CD8-positive, alpha-beta T cell (primary cell): ENCODE measurements at regions of chr6 and their contacts with region 1.

Region 1: DNA sequence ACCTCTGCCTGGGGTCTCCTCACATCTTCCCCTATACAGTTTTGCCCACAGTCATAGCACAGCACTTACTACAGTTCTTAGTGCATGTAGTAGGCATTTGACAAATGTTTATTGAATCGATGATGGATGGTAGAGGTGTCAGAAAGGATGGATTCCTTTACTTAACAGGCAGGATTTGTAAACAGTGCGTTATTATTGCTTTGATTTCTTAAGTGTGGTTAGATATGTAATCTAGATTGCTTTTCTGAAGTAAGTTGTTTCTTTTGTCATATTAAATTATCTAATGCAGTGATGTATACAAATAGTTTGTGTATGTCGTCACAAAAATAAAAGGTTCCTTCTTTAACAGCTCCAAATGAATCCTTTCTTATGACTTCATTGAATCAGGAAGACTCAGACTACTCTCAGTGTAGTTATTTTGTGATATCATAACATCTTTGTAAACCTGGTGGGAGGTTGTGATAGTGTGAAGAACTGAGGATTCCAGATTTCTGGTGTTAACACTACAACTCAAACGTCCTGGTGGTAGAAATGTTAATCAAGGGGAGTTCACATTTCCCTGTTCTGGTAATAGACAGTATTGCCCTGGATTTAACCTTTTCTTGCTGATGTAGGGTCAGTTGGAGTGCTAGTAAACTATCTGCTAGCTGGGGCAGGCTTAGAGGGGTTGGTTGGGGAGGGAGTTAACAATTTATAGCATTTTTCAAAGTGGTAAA is 87.7 kb downstream of the HIVEP1 start:
- DNase-seq: no peak
- ATAC-seq: no peak
- H3K4me3 ChIP-seq: no peak overlapping the region
- H3K4me3 Mint-ChIP-seq: no peak overlapping the region
- H3K27ac ChIP-seq: no peak overlapping the region
- H3K27ac Mint-ChIP-seq: no peak overlapping the region
- H3K4me1 ChIP-seq: no peaks in the 10 kb centered on the region
- H3K4me1 Mint-ChIP-seq: peaks cover 44% of the 10 kb centered on the region
- H3K27me3 ChIP-seq: no peaks in the 10 kb centered on the region
- H3K27me3 Mint-ChIP-seq: no peaks in the 10 kb centered on the region
- CTCF ChIP-seq: no peak

Region 2: DNA sequence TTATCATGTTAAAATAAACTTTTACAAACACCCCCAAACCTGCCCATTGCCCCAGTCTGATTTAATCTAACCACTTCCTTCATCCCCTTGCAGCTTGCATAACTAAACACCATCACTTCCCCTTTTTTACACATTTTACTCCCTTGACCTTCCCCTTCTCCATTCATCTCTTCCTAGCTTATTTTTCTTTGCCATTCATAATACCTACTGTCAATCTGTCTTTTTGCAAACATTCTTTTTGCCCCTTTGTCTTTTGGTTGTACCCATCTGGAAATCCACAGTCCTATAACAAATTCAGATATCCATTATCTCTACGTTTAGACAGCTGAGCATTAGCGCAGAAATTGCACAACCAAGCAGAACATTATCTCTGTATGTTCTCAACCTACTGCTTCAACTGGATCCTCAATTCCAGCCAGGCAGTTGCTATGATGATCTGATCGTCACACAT is 1456.6 kb before region 1 on chr6:
- CTCF ChIA-PET with region 1: no interaction called
- POLR2A ChIA-PET with region 1: no interaction called
- intact Hi-C with region 1: no loop called
- DNase-seq: peak in 1 of 9 experiments; percentile 6
- ATAC-seq: no peak
- H3K4me3 ChIP-seq: no peak overlapping the region
- H3K4me3 Mint-ChIP-seq: no peak overlapping the region
- H3K27ac ChIP-seq: no peak overlapping the region
- H3K27ac Mint-ChIP-seq: no peak overlapping the region
- H3K4me1 ChIP-seq: no peaks in the 10 kb centered on the region
- H3K4me1 Mint-ChIP-seq: peaks cover 8% of the 10 kb centered on the region
- H3K27me3 ChIP-seq: no peaks in the 10 kb centered on the region
- H3K27me3 Mint-ChIP-seq: peaks cover 14% of the 10 kb centered on the region
- CTCF ChIP-seq: no peak

Region 3: DNA sequence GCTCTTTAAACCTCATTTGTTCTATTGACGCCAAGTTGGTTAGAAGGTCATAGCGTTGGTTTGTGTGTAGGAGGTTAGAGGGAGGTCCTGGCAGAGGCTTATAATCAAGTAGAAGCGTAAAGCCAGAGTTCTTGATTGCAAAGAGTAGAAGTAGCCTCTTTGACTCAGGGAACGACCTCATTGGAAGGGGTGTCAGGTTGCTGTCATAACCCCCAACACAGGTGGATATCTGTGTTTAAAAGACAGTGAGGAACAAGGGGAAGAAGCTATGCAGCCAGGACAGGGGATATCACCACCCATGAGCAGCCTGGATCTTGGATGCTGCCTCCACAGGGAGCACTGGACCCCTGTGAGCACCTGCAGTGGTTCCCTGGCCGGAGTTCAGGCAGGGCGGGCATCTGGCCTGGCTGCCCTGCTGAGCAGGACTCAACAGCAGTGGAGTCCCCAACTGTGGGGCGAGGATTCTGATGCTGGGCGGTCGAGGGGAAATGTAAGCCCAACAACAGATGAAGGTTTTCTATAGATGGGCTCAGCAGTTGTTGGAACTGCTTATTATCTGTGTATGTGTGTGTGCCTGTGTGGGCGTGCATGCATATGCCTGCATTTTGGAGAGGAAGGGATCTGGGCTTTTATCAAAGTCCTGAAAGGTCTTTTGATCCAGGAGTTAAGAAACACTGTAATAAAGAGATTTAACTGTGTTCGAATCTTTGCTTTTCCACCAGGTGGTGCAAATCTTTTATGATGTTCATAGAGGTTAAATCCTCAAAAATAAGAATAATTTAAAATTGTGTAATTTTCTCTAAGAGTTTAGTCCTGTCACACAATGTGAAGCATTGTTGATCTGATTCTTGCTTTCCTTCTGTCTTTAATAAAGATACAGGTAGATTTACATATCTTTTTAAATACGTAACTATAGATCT is 60.0 kb before region 1 on chr6:
- CTCF ChIA-PET with region 1: no interaction called
- POLR2A ChIA-PET with region 1: no interaction called
- intact Hi-C with region 1: no loop called
- DNase-seq: no peak
- ATAC-seq: no peak
- H3K4me3 ChIP-seq: no peak overlapping the region
- H3K4me3 Mint-ChIP-seq: no peak overlapping the region
- H3K27ac ChIP-seq: no peak overlapping the region
- H3K27ac Mint-ChIP-seq: peak overlapping the region; percentile 69
- H3K4me1 ChIP-seq: peaks cover 15% of the 10 kb centered on the region
- H3K4me1 Mint-ChIP-seq: peaks cover 63% of the 10 kb centered on the region
- H3K27me3 ChIP-seq: no peaks in the 10 kb centered on the region
- H3K27me3 Mint-ChIP-seq: no peaks in the 10 kb centered on the region
- CTCF ChIP-seq: no peak

Region 4: DNA sequence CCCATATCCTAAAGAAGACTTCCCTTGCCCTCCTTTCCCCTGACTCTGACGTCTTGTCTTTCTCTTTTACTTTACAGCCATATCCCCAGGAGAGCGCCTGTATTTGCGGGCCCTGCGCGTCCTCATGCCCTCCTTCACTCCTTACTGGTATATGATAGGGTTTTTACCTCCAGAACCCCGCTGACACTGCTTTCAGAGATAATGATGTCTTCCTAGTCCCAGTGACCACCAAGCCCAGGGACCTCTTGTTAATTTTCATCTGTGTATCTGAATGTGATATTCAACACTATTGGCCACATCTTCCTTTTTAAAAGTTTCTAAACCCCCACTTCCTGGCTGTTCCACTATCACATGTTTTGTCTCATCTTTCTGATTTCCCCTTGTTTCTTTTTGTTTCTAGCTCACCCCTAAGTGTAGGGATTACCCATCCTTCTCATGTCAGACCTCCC is 14.3 kb after region 1 on chr6:
- CTCF ChIA-PET with region 1: no interaction called
- POLR2A ChIA-PET with region 1: interaction called, 3 read pairs
- intact Hi-C with region 1: loop called in 1 of 2 experiments (anchors 2 kb)
- DNase-seq: peak in 1 of 9 experiments; percentile 17
- ATAC-seq: no peak
- H3K4me3 ChIP-seq: no peak overlapping the region
- H3K4me3 Mint-ChIP-seq: no peak overlapping the region
- H3K27ac ChIP-seq: no peak overlapping the region
- H3K27ac Mint-ChIP-seq: peak overlapping the region; percentile 7
- H3K4me1 ChIP-seq: peaks cover 60% of the 10 kb centered on the region
- H3K4me1 Mint-ChIP-seq: peaks cover 62% of the 10 kb centered on the region
- H3K27me3 ChIP-seq: no peaks in the 10 kb centered on the region
- H3K27me3 Mint-ChIP-seq: no peaks in the 10 kb centered on the region
- CTCF ChIP-seq: no peak

Region 5: DNA sequence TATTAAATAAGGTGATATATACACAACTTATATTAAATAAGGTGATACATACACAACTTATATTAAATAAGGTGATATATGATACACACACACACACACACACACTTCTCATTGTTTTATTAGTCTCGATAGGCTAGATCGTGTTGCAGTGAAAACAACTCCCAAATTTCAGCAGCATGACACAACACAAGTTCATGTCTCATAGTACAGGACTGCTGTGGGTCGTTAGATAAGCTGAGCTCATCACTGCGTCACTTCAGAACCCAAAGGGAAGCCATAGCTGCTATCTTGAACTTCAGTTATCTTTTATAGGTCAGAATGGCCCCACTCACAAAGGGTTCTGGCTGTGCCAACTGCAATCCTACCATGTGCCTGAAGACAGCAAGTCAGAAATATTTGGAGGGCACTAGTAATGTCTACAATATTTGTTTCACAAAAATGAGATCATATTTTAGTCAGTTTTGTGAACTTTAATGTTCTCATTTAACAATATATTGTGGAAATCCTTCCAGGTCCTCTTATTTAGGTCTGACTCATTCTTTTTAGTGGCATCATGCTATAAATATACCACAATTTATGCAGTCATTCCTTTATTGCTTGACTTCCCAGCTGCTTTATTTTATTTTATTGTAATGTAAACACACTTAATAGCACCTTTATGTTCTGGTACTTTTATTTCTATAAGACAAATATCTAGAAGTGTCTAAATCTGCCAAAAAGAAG is 907.0 kb after region 1 on chr6:
- CTCF ChIA-PET with region 1: no interaction called
- POLR2A ChIA-PET with region 1: no interaction called
- intact Hi-C with region 1: no loop called
- DNase-seq: no peak
- ATAC-seq: no peak
- H3K4me3 ChIP-seq: no peak overlapping the region
- H3K4me3 Mint-ChIP-seq: no peak overlapping the region
- H3K27ac ChIP-seq: no peak overlapping the region
- H3K27ac Mint-ChIP-seq: no peak overlapping the region
- H3K4me1 ChIP-seq: no peaks in the 10 kb centered on the region
- H3K4me1 Mint-ChIP-seq: no peaks in the 10 kb centered on the region
- H3K27me3 ChIP-seq: peaks cover 0 to 2% of the 10 kb centered on the region in 2 experiments
- H3K27me3 Mint-ChIP-seq: peaks cover 20% of the 10 kb centered on the region
- CTCF ChIP-seq: no peak